Tibial artery (tissue), 4 donors: ENCODE measurements at regions of chr1 and their contacts with region 1.

Region 1: DNA sequence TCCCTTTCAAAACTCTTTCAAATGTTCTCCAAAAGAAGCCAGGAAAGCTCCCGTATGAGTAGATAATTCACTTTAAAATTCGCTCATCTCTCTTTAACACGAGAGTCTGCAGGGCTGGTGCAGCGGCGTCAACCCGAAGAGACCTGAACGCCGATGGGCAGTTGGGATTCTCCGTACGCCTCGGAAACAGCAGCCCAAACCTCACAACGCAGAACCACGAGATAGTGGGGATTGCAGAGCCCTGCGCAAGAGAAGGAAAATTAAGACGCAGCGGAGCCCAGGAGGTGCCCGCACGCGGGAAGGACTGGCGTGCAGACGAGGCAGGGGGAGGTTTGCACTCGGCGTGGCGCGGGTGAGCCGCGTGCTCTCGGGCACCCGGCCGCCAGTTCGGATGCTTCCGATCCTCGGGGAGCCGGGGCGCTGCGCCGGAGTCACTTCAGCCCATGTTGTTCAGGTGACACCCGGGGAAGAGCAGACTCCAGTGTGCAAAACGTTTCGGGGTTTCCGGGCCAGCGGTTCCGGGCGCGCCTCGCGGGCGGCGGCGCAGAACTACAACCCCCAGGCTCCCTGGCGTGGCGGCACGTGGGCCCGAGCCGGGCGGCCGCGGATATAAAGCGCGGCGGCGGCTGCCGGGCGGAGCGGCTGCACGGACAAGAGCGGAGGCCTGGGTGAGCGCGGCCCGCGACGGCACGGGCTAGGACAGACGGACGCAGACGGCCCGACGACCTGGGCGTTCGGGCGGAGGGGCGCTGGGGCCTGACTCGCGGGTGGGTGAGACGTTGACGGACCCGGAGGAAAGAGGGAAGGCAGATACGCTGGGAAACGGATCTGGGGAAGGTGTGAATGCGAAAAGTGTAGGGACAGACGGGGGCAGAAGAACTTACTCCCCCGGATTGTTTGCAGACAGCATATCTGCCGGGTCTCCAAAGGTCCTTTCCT is at the start of gene NPL:
- DNase-seq: peak; percentile 71 to 87
- H3K4me3 ChIP-seq: peak within 1 kb of the TSS; percentile 64 to 76
- H3K27ac ChIP-seq: peak within 1 kb of the TSS; percentile 46 to 67
- H3K4me1 ChIP-seq: peaks cover 0 to 14% (median 4%) of the 10 kb centered on the region in 4 donors
- H3K27me3 ChIP-seq: no peaks in the 10 kb centered on the region
- CTCF ChIP-seq: peak in 1 of 2 experiments; percentile 10

Region 2: DNA sequence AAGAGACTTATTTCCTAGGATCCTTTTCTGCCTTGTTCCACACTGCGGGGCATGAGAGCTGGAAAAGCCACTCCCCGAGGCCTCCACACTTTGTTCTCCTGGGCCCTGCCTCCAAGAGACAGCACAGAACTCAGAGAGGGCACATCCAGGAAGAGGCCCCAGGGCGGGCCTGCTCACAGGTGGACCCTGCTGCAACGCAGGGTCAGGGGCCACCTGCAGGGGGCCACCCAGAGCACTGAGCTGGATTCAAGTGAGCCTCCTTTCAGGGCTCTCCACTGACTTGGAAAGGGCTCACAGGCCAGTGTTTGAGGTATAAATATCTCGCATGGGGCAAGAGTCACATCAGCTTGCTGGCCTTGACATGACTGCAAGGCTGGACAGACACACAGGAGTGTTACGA is 190.1 kb before region 1 on chr1:
- intact Hi-C with region 1: loop called (anchors 2 kb)
- DNase-seq: no peak
- H3K4me3 ChIP-seq: no peak overlapping the region
- H3K27ac ChIP-seq: no peak overlapping the region
- H3K4me1 ChIP-seq: peaks cover 0 to 40% (median 20%) of the 10 kb centered on the region in 4 donors
- H3K27me3 ChIP-seq: no peaks in the 10 kb centered on the region
- CTCF ChIP-seq: no peak

Region 3: DNA sequence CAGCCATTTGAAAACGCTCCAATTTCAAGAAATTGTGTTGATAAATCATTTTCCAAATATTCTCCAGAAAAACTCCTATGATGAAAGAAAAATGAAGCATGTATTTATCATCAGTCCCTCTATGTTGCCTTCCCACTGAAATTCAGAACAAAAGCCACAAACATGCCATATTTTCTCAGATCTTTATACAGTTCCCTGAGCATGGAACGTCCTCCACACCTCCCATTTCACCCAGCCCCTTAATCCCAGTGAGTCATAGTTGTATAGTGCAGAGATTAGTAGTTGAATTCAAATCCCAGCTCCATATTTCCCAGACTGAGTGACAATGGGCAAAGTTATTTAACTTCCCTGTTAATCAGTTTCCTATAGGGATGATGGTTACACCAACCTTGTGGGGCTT is 20.4 kb before region 1 on chr1:
- intact Hi-C with region 1: no loop called
- DNase-seq: no peak
- H3K4me3 ChIP-seq: no peak overlapping the region
- H3K27ac ChIP-seq: no peak overlapping the region
- H3K4me1 ChIP-seq: peaks cover 0 to 6% (median 2%) of the 10 kb centered on the region in 4 donors
- H3K27me3 ChIP-seq: no peaks in the 10 kb centered on the region
- CTCF ChIP-seq: no peak

Region 4: DNA sequence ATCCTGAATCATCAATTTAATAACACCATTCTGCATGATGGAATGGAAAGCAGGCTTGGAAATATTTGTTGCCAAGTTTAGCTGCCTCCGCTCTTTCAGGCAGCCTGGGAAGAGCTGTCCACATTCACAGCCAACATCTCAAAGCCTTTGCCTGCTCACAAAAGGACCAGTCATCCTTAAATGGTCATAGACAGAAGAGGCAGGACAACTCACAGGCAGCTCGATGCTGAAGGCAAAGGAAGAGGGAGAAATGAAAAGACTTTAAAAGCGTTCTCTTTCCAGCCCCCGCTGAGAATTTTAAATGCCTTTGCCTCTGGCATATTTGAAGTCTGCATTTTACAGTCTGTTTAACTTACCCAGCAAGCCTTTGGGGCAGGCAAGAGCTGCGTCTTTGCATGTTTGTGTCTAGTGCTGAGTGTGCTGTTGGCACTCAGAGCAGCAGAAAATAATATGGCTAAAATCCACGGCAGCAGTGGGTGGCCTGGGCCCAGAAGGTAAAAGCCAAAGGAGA is 559.8 kb after region 1 on chr1:
- intact Hi-C with region 1: no loop called
- DNase-seq: no peak
- H3K4me3 ChIP-seq: no peak overlapping the region
- H3K27ac ChIP-seq: peak overlapping the region; percentile 17 to 59
- H3K4me1 ChIP-seq: peaks cover 0 to 13% (median 13%) of the 10 kb centered on the region in 4 donors
- H3K27me3 ChIP-seq: no peaks in the 10 kb centered on the region
- CTCF ChIP-seq: no peak